Activated CD8-positive, alpha-beta memory T cell treated with anti-CD3 and anti-CD28 coated beads, Interleukin-2, amount 10 ng/mL, durations not matched to agents 7 days and 5 days (primary cell): ENCODE measurements at regions of chr16 and their contacts with region 1.

Region 1: GRCh38 chr16:67846320-67847063 is at the start of gene NUTF2:
- DNase-seq: peak; percentile 98
- ATAC-seq: peak; percentile 69
- H3K4me3 Mint-ChIP-seq: peak within 1 kb of the TSS; percentile 79
- H3K27ac Mint-ChIP-seq: peak within 1 kb of the TSS; percentile 91
- H3K4me1 Mint-ChIP-seq: peaks cover 52% of the 10 kb centered on the region
- H3K27me3 Mint-ChIP-seq: no peaks in the 10 kb centered on the region
- total RNA-seq, gene NUTF2: 114 to 137 TPM

Region 2: GRCh38 chr16:67207857-67208519 is 638.5 kb before region 1 on chr16:
- CTCF ChIA-PET with region 1: no interaction called
- DNase-seq: no peak
- ATAC-seq: no peak
- H3K4me3 Mint-ChIP-seq: no peak overlapping the region
- H3K27ac Mint-ChIP-seq: no peak overlapping the region
- H3K4me1 Mint-ChIP-seq: no peaks in the 10 kb centered on the region
- H3K27me3 Mint-ChIP-seq: no peaks in the 10 kb centered on the region

Region 3: DNA sequence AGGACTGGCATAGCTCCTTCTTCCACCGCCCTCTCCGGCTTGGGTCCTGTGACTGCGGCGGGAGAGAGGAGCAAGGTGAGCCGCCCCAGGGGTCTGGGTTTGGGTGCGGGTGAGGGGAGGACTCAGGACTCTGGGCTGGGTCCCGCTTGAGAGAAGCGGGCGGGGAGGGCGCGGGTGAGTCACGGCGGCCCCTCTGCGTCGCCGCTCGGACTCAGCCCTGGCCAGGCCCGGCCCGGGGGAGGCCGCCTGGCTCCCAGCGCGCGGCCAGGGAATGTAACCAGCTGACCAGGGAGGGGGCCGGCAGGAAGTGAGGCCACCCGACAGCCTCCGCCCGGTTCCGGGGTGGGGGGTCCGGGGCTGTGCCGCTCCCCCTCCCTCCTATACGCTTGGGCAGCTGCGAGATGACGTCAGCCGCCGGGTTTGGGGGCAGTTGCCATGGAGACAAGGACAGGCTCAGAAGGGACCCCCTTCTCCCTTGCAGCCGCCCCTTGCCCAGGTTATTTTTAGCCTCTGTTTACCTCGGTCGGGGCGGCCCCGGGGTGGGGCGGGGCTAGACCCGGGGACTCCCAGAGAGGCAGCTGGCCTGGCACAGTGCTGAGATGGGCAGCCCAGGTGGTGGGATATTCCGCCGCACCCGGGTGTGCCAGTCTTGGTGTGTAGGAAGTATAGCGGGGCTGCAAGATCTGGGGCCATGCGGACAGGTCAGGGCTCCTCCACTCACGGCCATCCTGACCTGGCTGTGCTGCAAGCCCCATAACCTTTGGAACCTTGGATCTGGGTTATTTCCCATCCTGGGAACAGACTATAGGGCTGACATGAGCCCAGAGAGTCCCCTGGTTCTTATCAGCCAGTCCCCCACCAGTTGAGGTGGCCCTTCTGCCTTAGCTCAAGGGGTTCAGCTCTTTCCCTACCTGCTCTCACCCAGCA is 316.2 kb before region 1 on chr16:
- CTCF ChIA-PET with region 1: no interaction called
- DNase-seq: no peak
- ATAC-seq: no peak
- H3K4me3 Mint-ChIP-seq: peak overlapping the region; percentile 42
- H3K27ac Mint-ChIP-seq: no peak overlapping the region
- H3K4me1 Mint-ChIP-seq: peaks cover 18% of the 10 kb centered on the region
- H3K27me3 Mint-ChIP-seq: peaks cover 56% of the 10 kb centered on the region

Region 4: DNA sequence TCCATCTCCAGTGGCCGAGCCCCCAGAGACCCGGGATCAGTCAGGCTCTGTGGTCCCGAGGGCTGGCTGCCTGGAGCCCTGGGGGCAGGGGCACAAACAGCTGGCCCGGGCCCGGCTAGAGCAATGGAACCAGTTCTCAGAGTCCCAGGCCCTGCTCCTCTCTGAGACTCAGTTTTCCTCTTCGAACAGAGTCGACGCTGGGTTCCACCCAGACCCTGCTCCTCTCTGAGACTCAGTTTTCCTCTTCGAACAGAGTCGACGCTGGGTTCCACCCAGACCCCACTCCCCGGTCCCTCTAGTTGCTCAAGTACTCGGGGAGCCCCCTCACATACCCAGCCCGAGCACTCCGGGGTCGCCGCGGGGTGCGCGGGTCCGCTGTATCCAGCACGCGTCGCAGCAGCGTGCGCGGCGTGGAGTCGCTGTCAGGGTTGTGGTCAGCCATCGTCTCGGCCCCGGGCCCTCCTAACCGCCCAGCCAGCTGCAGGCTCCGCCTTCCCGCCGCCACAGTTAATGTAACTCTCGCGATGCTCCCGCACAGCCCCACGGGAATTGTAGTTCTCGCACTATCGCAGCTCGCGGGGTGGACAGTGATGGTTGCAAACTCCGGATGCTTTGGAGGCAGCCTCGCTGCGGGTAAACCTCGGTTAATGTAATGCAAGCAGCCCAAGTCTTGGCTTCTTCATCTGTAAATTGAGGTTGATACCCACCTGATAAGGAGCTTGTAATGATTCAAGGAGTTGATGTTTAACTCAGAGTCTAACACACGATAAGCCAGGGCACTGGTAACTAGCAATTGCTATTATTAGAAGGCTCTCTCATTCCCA is 12.9 kb before region 1 on chr16:
- CTCF ChIA-PET with region 1: interaction called, 21 read pairs
- DNase-seq: peak; percentile 97
- ATAC-seq: peak; percentile 99
- H3K4me3 Mint-ChIP-seq: peak overlapping the region; percentile 83
- H3K27ac Mint-ChIP-seq: peak overlapping the region; percentile 81
- H3K4me1 Mint-ChIP-seq: peaks cover 12% of the 10 kb centered on the region
- H3K27me3 Mint-ChIP-seq: no peaks in the 10 kb centered on the region